A549 (cell line): ENCODE measurements at regions of chr1 and their contacts with region 1.

Region 1: GRCh38 chr1:160261893-160262794 is at the start of gene DCAF8:
- DNase-seq: peak; percentile 89 to 98
- ATAC-seq: peak; percentile 95 to 96
- H3K4me3 ChIP-seq: peak within 1 kb of the TSS; percentile 83
- H3K27ac ChIP-seq: peak within 1 kb of the TSS; percentile 96 to 99
- H3K4me1 ChIP-seq: peaks cover 36% of the 10 kb centered on the region
- CTCF ChIP-seq: no peak
- EP300 ChIP-seq: no peak
- POLR2A ChIP-seq: peak; percentile 97
- RAD21 ChIP-seq: no peak
- polyA plus RNA-seq, gene DCAF8: 103 and 113 TPM in 2 replicates

Region 2: DNA sequence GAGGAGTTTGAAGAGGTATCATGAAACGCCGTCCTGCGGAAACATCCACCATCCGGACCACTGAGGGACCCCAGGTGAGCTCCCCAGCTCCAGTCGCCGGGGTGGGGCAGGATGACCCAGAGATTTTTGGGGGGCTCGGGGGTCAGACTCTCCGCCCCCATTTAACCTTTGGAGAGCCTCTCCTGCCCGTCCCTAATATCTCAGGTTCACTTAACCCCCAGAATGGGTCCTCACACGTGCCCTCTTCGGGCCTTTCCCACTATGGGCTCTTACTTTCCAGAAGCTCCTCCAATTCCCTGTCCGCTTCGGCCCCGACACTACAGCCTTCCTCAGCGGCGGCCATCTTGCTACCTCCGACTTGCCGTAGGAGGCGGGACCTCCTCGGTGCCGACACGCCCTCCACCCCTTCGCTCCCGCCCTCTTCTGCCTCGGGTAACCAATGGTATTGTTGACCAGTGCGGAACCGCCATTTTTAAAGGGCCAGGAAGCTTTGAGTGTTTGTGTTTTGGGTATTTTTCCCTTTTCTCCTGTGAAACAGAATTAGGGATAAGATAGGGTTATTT is 22.7 kb after region 1 on chr1 and contains the start of gene PEX19:
- CTCF ChIA-PET with region 1: interaction called, 38 read pairs
- POLR2A ChIA-PET with region 1: interaction called, 10 read pairs
- DNase-seq: peak; percentile 95 to 97
- ATAC-seq: peak; percentile 98 to 99
- H3K4me3 ChIP-seq: peak within 1 kb of the TSS; percentile 91
- H3K27ac ChIP-seq: peak within 1 kb of the TSS; percentile 93 to 95
- H3K4me1 ChIP-seq: peaks cover 6% of the 10 kb centered on the region
- CTCF ChIP-seq: no peak
- EP300 ChIP-seq: no peak
- POLR2A ChIP-seq: peak; percentile 89
- RAD21 ChIP-seq: no peak
- polyA plus RNA-seq, gene PEX19: 54.3 and 56.7 TPM in 2 replicates